Dorsolateral prefrontal cortex (tissue), 120 donors: ENCODE measurements at regions of chr18 and their contacts with region 1.

Region 1: DNA sequence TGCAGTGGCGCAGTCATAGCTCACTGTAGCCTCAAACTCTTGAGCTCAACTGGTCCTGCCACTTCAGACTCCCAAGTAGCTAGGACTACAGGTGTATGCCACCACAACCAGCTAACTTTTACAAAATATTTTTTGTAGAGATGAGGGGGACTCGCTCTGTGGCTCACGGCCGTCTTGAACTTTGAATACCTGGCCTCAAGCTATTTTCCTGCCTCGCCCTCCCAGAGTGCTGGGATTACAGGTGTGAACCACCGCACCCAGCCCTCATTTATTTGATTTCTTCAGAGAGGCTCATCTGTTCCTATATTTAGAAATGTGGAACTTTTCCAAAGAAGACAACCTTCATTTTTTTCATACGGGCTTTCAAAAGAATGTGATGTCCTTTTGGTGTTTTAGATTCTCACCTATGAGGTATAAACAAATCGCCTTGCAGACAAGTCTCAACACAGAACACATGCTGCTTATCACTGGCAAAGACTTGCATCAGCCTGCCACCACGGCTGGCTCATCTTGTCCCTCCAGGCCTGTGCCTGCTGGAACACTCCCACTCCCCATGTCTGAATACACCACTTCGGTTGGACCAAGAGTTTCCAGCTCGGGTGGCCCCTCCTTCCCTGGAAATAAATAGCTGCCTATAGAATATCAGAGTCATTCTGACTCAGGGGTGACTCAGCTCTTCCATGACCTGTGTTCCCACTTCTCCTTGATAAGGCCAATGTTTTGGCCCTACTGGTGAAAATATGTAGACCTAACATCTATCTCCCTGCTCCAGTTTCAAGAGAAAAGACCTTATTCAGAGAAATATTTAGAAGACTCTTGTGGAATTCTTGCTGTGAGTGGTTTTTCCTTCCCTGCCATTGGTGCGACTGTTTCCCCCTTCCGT is 202.6 kb downstream of the TGIF1 start:
- DNase-seq: peak in 8 of 10 donors; percentile 24 to 85 (median 60)
- H3K4me3 ChIP-seq: no peak overlapping the region
- H3K27ac ChIP-seq: peak overlapping the region in 46 of 59 donors; percentile 2 to 79 (median 60)
- H3K27me3 ChIP-seq: no peaks in the 10 kb centered on the region
- CTCF ChIP-seq: no peak

Region 2: GRCh38 chr18:3604498-3605408 is 47.9 kb before region 1 on chr18:
- intact Hi-C with region 1: loop called in 1 of 2 experiments (anchors 5 kb)
- DNase-seq: no peak
- H3K4me3 ChIP-seq: peak overlapping the region in 56 of 59 donors; percentile 0 to 72 (median 50)
- H3K27ac ChIP-seq: peak overlapping the region; percentile 36 to 98 (median 92)
- H3K27me3 ChIP-seq: no peaks in the 10 kb centered on the region
- CTCF ChIP-seq: peak in 1 of 56 donors; percentile 4